Gastrocnemius medialis (tissue), 4 donors: ENCODE measurements at regions of chr6 and their contacts with region 1.

Region 1: GRCh38 chr6:40395066-40395704 is 192.0 kb downstream of the LRFN2 start:
- DNase-seq: peak; percentile 86 to 91
- ATAC-seq: peak; percentile 94 to 95
- H3K4me3 ChIP-seq: no peak overlapping the region
- H3K27ac ChIP-seq: peak overlapping the region; percentile 61 to 80 (median 74)
- H3K4me1 ChIP-seq: peaks cover 4 to 18% of the 10 kb centered on the region in 2 donors
- H3K27me3 ChIP-seq: no peaks in the 10 kb centered on the region
- CTCF ChIP-seq: peak in 1 of 5 experiments; percentile 31
- POLR2A ChIP-seq: no peak

Region 2: GRCh38 chr6:40349123-40349900 is 45.9 kb before region 1 on chr6:
- in situ Hi-C with region 1: no loop called
- intact Hi-C with region 1: no loop called
- DNase-seq: no peak
- ATAC-seq: no peak
- H3K4me3 ChIP-seq: no peak overlapping the region
- H3K27ac ChIP-seq: no peak overlapping the region
- H3K4me1 ChIP-seq: peaks cover 8 to 18% of the 10 kb centered on the region in 2 donors
- H3K27me3 ChIP-seq: no peaks in the 10 kb centered on the region
- CTCF ChIP-seq: no peak
- POLR2A ChIP-seq: no peak

Region 3: GRCh38 chr6:40376113-40376650 is 19.0 kb before region 1 on chr6:
- in situ Hi-C with region 1: no loop called
- intact Hi-C with region 1: loop called (anchors 1 kb)
- DNase-seq: peak in 1 of 2 donors; percentile 31
- ATAC-seq: peak; percentile 98 to 99
- H3K4me3 ChIP-seq: no peak overlapping the region
- H3K27ac ChIP-seq: peak overlapping the region; percentile 42 to 77 (median 51)
- H3K4me1 ChIP-seq: peaks cover 9 to 14% of the 10 kb centered on the region in 2 donors
- H3K27me3 ChIP-seq: no peaks in the 10 kb centered on the region
- CTCF ChIP-seq: no peak
- POLR2A ChIP-seq: no peak